PC-9 (cell line): ENCODE measurements at regions of chr5 and their contacts with region 1.

Region 1: GRCh38 chr5:120457839-120458507 is 6.1 kb upstream of the PRR16 start:
- DNase-seq: peak; percentile 40 to 80
- H3K4me3 ChIP-seq: peak overlapping the region; percentile 54
- H3K27ac ChIP-seq: no peak overlapping the region
- H3K4me1 ChIP-seq: peaks cover 5% of the 10 kb centered on the region; the same call in 1 of the 2 replicates
- H3K27me3 ChIP-seq: peaks cover 3% of the 10 kb centered on the region; the same call in 1 of the 2 replicates
- CTCF ChIP-seq: peak; percentile 89

Region 2: GRCh38 chr5:119470851-119471451 is 987.0 kb before region 1 on chr5:
- CTCF ChIA-PET with region 1: no interaction called
- POLR2A ChIA-PET with region 1: no interaction called
- intact Hi-C with region 1: loop called (anchors 5 kb)
- DNase-seq: no peak
- H3K4me3 ChIP-seq: no peak overlapping the region
- H3K27ac ChIP-seq: no peak overlapping the region
- H3K4me1 ChIP-seq: no peaks in the 10 kb centered on the region
- H3K27me3 ChIP-seq: no peaks in the 10 kb centered on the region
- CTCF ChIP-seq: peak; percentile 50

Region 3: DNA sequence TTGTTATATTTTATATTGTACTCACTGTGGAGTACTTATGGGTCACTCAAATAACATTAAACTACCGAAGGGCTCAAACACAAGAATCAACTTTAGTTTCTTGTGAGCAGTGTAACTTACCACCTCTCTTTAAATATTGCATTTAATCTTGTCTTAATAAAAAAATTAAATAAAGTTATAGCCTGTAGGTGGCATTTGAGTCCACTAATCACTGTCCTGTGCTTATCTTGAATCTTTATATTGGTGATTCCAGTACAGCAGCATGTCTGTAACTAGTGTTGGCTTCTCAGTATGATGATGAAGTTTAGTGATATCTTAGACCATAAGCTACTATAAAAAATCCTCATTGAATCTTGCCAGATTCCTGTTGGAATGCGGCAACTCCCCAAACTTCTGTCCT is 514.8 kb before region 1 on chr5:
- CTCF ChIA-PET with region 1: no interaction called
- POLR2A ChIA-PET with region 1: no interaction called
- intact Hi-C with region 1: loop called (anchors 5 kb)
- DNase-seq: no peak
- H3K4me3 ChIP-seq: no peak overlapping the region
- H3K27ac ChIP-seq: no peak overlapping the region
- H3K4me1 ChIP-seq: no peaks in the 10 kb centered on the region
- H3K27me3 ChIP-seq: no peaks in the 10 kb centered on the region
- CTCF ChIP-seq: peak; percentile 62

Region 4: DNA sequence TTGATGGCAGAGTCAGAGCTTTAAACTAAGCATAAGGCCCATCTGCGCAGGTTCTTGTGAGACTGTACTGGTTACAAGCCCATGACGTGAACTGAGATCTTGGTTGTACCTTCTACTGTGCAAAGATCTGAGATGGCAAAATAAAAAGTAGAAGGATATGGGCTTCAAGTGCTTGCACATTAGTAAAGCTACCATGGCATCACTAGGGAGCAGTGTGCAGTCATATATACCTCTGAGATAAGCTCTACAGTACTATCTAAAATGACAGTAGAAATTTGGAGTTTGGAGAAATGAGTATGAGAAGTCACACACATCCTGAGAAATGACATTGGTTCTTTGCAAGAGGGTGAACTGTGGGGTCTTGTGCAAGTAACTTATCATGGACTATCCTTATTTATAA is 402.1 kb before region 1 on chr5:
- CTCF ChIA-PET with region 1: no interaction called
- POLR2A ChIA-PET with region 1: interaction called, 6 read pairs
- intact Hi-C with region 1: loop called (anchors 5 kb)
- DNase-seq: no peak
- H3K4me3 ChIP-seq: no peak overlapping the region
- H3K27ac ChIP-seq: no peak overlapping the region
- H3K4me1 ChIP-seq: no peaks in the 10 kb centered on the region
- H3K27me3 ChIP-seq: no peaks in the 10 kb centered on the region
- CTCF ChIP-seq: peak; percentile 32; the same call in 1 of the 2 replicates

Region 5: DNA sequence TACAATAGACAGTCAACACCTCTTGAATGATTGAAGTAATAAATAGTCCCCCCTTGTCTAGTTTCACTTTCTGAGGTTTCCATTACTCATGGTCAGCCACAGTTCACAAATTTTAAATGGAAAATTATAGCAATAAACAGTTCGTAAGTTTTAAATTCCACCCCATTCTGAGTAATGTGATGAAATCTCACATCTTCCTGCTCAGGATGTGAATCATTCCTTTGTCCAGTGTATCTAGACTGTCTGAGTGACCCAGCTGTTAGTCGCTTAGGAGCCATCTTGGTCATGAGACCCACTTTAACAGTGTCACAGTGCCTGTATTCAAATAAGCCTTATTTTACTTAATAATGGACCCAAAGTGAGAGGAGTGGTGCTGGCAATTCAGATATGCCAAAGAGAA is 305.5 kb before region 1 on chr5:
- CTCF ChIA-PET with region 1: no interaction called
- POLR2A ChIA-PET with region 1: no interaction called
- intact Hi-C with region 1: loop called (anchors 10 kb)
- DNase-seq: no peak
- H3K4me3 ChIP-seq: no peak overlapping the region
- H3K27ac ChIP-seq: peak overlapping the region; percentile 23; the same call in 1 of the 2 replicates
- H3K4me1 ChIP-seq: no peaks in the 10 kb centered on the region
- H3K27me3 ChIP-seq: no peaks in the 10 kb centered on the region
- CTCF ChIP-seq: no peak